WTC11 (cell line): ENCODE measurements at regions of chr9 and their contacts with region 1.

Region 1: GRCh38 chr9:79254900-79255650 is 316.7 kb upstream of the TLE4 start:
- DNase-seq: peak; percentile 42
- ATAC-seq: peak; percentile 81
- H3K4me3 Mint-ChIP-seq: no peak overlapping the region
- H3K27ac Mint-ChIP-seq: no peak overlapping the region
- H3K4me1 Mint-ChIP-seq: no peaks in the 10 kb centered on the region
- H3K27me3 Mint-ChIP-seq: no peaks in the 10 kb centered on the region
- CTCF ChIP-seq: no peak

Region 2: GRCh38 chr9:79129865-79130480 is 125.1 kb before region 1 on chr9:
- CTCF ChIA-PET with region 1: interaction called, 38 read pairs
- POLR2A ChIA-PET with region 1: interaction called, 3 read pairs
- DNase-seq: peak; percentile 55
- ATAC-seq: peak; percentile 26; the same call in 1 of the 2 replicates
- H3K4me3 Mint-ChIP-seq: no peak overlapping the region
- H3K27ac Mint-ChIP-seq: no peak overlapping the region
- H3K4me1 Mint-ChIP-seq: peaks cover 19% of the 10 kb centered on the region
- H3K27me3 Mint-ChIP-seq: no peaks in the 10 kb centered on the region
- CTCF ChIP-seq: peak; percentile 57

Region 3: DNA sequence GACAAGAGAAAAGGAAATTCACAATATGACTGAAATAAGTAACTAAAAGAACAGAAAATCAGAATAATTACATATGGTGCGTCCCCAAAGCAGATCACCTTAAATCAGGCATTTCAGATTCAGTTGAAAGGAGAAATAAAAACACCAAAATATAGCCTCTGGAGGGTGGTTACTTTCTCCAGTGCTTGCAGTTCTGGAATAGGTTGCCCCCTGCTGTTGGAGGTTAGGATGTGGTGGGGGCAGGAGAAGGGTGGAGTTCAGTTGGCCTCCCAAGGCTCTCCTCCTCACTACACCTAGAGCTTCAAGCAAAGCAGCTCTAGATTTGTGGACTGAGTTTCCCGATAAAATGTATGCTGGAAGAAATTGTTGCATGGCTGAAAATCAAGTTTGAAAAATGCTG is 21.5 kb before region 1 on chr9:
- CTCF ChIA-PET with region 1: interaction called, 12 read pairs
- POLR2A ChIA-PET with region 1: no interaction called
- DNase-seq: peak; percentile 54
- ATAC-seq: peak; percentile 98
- H3K4me3 Mint-ChIP-seq: no peak overlapping the region
- H3K27ac Mint-ChIP-seq: no peak overlapping the region
- H3K4me1 Mint-ChIP-seq: peaks cover 1% of the 10 kb centered on the region
- H3K27me3 Mint-ChIP-seq: no peaks in the 10 kb centered on the region; the same call in 1 of the 2 replicates
- CTCF ChIP-seq: peak; percentile 47; the same call in 1 of the 2 replicates

Region 4: DNA sequence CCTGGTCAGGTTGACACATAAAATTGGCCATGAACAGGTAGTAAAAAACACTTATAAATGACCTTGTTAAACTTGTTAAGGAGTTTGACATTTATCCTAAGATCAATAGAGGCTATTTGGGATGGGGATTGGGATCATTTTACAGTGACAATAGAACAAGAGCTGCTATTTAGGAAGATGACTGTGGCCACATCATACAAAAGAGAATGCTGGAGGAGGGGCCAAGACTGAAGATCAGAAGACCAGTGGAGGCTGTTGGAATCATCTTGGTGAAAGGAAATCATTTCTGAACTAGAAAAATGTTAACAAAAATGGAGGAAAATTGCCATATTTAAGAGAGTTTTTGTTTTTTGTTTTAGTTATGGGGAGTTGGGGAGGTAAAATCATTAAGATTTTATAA is 11.9 kb after region 1 on chr9:
- CTCF ChIA-PET with region 1: interaction called, 10 read pairs
- POLR2A ChIA-PET with region 1: no interaction called
- DNase-seq: no peak
- ATAC-seq: no peak
- H3K4me3 Mint-ChIP-seq: no peak overlapping the region
- H3K27ac Mint-ChIP-seq: no peak overlapping the region
- H3K4me1 Mint-ChIP-seq: no peaks in the 10 kb centered on the region
- H3K27me3 Mint-ChIP-seq: no peaks in the 10 kb centered on the region
- CTCF ChIP-seq: no peak

Region 5: DNA sequence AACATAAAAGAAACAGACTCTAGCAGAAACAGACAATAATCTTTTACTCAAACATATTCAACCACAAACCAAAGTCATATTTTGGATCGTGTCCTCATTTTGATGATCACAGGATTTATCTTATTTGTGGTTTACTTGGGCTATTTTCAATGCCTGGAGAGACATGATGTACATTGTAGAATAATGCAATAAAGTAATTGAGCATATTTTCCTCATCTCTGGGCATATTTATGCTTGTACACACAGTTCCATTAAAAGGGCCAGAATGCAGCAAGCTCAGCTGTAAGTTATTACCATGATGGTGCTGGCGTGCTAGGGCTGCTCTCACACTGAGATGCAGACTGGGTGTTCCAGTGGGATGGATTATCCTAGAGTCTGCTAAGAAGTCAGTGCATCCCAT is 773.4 kb after region 1 on chr9:
- CTCF ChIA-PET with region 1: no interaction called
- POLR2A ChIA-PET with region 1: no interaction called
- DNase-seq: no peak
- ATAC-seq: no peak
- H3K4me3 Mint-ChIP-seq: no peak overlapping the region
- H3K27ac Mint-ChIP-seq: no peak overlapping the region
- H3K4me1 Mint-ChIP-seq: peaks cover 9% of the 10 kb centered on the region
- H3K27me3 Mint-ChIP-seq: peaks cover 5% of the 10 kb centered on the region; the same call in 1 of the 2 replicates
- CTCF ChIP-seq: no peak